ENCODE measurements at regions of chr16 and their contacts with region 1.

Region 1: DNA sequence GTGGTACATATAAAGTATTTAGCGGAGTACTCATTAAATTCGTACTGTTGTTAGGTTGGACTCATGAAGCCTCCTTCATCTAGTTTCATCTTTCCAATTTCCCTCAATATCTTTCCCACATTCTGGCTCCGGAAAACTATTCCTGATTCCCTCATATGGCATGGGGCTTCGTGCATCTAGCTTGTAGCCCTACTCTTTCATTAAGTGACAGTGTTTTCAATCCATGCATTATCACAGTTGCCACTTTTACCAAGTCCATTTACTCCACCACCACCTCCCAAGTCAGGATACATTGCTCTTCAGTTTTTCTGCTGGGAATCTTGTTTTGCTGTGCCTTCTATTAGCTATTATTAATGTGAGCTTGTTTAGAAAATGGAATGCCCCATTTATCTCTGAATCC is 1032.1 kb upstream of the RBFOX1 start:
- DNase-seq: no peak
- H3K4me3 ChIP-seq: no peak overlapping the region
- H3K27ac ChIP-seq: no peak overlapping the region
- H3K4me1 ChIP-seq: no peaks in the 10 kb centered on the region
- H3K27me3 ChIP-seq: no peaks in the 10 kb centered on the region
- CTCF ChIP-seq: no peak
- POLR2A ChIP-seq: no peak

Region 2: DNA sequence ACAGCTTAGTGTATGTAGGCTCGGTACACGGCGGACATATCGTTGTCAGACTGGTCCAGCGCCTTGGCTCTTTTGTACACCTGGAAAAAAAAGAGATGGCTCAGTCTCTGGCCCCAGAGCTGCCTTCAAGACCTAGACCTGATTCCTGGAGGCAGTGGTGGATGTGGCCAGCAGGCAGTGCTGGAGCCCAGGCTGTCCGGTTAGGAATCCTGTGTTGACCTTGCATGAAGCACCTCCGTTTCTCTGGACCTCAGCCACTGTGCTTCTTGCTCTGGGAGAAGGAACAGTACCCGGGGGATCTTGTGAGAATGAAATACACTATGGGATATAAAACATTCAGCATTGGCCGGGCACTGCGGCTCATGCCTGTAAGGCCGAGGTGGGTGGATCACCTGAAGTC is 1495.3 kb before region 1 on chr16:
- intact Hi-C with region 1: no loop called
- DNase-seq: no peak
- H3K4me3 ChIP-seq: no peak overlapping the region
- H3K27ac ChIP-seq: no peak overlapping the region
- H3K4me1 ChIP-seq: peaks cover 8% of the 10 kb centered on the region in 2 donors
- H3K27me3 ChIP-seq: no peaks in the 10 kb centered on the region
- CTCF ChIP-seq: no peak
- POLR2A ChIP-seq: no peak

Region 3: DNA sequence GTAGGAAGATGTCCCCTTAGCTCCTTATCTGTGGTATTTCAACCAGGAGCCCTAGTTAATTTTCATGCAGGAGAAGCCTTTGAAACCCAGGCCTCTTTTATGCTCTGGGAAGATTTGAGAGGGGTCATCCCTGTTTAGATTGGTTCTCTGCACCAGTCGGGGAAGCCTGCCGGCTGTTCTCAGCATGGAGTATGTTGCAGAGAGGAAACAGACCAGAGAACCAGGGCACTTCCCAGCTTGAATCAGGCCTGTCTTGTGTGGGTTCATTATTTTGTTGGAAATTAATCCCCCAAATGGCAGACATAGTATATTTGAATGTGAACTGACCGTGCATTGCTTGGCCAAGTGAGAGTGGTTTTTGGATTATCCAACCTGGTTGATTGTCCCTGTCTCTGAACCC is 50.0 kb before region 1 on chr16:
- intact Hi-C with region 1: loop called (anchors 5 kb)
- DNase-seq: no peak
- H3K4me3 ChIP-seq: no peak overlapping the region
- H3K27ac ChIP-seq: no peak overlapping the region
- H3K4me1 ChIP-seq: no peaks in the 10 kb centered on the region
- H3K27me3 ChIP-seq: no peaks in the 10 kb centered on the region
- CTCF ChIP-seq: no peak
- POLR2A ChIP-seq: no peak